PC-9 (cell line): ENCODE measurements at regions of chr4 and their contacts with region 1.

Region 1: DNA sequence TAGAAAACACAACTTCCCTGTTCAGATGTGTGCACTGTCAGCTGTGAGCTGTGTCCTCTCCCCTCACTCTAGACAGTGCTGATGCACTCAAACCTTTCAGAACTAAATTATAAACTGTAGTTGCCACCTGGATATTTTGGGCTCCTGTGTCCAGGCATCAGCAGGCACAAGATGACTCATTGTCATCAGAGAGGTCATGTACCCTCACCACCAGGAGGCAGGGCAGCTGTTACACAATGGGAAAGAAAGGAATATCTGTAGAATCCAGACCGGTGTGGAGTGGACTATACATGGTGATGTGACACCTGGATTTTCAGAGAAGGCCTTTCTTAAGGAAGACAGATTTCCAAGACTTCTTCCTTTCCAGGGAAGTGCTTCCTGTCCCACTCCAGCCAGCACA is 854.4 kb upstream of the AGA start:
- DNase-seq: no peak
- H3K4me3 ChIP-seq: no peak overlapping the region
- H3K27ac ChIP-seq: no peak overlapping the region
- H3K4me1 ChIP-seq: no peaks in the 10 kb centered on the region
- H3K27me3 ChIP-seq: no peaks in the 10 kb centered on the region
- CTCF ChIP-seq: no peak

Region 2: DNA sequence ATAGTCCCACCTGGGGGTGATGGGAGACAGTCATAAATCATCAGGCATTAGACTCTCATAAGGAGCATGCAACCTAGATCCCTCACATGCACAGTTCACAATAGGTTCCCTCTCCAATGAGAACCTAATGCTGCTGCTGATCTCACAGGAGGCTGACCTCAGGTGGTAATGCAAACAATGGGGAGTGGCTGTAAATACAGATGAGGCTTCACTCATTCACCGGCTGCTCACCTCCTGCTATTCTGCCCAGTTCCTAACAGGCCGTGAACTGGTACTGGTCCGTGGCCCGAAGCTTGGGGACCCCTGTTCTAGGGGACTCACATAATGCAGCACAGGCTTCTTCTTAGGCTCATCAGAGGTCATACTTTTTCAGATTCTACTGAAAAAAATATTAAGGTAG is 228.5 kb before region 1 on chr4:
- CTCF ChIA-PET with region 1: no interaction called
- POLR2A ChIA-PET with region 1: no interaction called
- intact Hi-C with region 1: no loop called
- DNase-seq: no peak
- H3K4me3 ChIP-seq: no peak overlapping the region
- H3K27ac ChIP-seq: no peak overlapping the region
- H3K4me1 ChIP-seq: no peaks in the 10 kb centered on the region
- H3K27me3 ChIP-seq: no peaks in the 10 kb centered on the region
- CTCF ChIP-seq: no peak

Region 3: DNA sequence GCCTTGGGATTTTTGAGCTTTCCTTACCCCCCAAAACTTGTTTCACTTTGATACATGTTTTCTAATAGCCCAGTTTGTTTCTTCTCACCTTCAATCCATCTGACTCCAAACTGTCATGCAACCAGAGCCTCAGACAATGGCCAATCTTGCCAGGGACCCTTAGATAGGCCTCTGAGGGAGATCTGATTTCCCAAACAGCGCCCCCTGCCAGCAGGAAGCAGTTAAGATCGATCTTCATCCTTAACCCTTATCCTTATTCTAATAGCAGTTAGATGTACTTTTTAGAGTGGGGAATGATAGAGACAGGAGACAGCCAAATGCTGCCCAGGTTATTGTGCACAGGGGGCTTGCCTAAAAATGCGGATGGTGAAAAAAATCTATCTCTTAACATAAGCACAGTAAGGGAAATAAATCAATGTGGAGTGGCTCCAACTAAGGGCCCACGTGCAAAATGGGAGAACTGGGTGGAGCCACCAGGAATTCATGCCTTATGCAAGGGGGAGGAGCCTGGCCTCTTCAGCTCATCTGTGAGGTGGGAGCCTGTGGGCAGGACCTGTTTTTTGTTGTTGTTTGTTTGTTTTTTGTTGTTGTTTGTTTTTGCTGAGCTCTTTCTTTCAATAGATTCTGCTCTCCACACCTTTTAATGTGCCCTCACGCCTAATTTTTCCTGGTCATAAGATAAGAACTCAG is 20.9 kb before region 1 on chr4:
- CTCF ChIA-PET with region 1: no interaction called
- POLR2A ChIA-PET with region 1: no interaction called
- intact Hi-C with region 1: loop called (anchors 1 kb)
- DNase-seq: no peak
- H3K4me3 ChIP-seq: no peak overlapping the region
- H3K27ac ChIP-seq: no peak overlapping the region
- H3K4me1 ChIP-seq: no peaks in the 10 kb centered on the region
- H3K27me3 ChIP-seq: no peaks in the 10 kb centered on the region
- CTCF ChIP-seq: peak; percentile 29; the same call in 1 of the 2 replicates

Region 4: GRCh38 chr4:178329226-178329872 is 32.7 kb after region 1 on chr4:
- CTCF ChIA-PET with region 1: no interaction called
- POLR2A ChIA-PET with region 1: no interaction called
- intact Hi-C with region 1: no loop called
- DNase-seq: no peak
- H3K4me3 ChIP-seq: no peak overlapping the region
- H3K27ac ChIP-seq: no peak overlapping the region
- H3K4me1 ChIP-seq: no peaks in the 10 kb centered on the region
- H3K27me3 ChIP-seq: no peaks in the 10 kb centered on the region
- CTCF ChIP-seq: no peak